ENCODE measurements at regions of chr12 and their contacts with region 1.

Region 1: GRCh38 chr12:32755654-32756475 is at the start of gene YARS2:
- DNase-seq: peak; percentile 97
- ATAC-seq: peak; percentile 95
- H3K4me3 ChIP-seq: peak within 1 kb of the TSS; percentile 98 to 99
- H3K27ac ChIP-seq: peak within 1 kb of the TSS; percentile 76
- H3K4me1 ChIP-seq: peaks cover 6 to 15% of the 10 kb centered on the region in 2 experiments; a peak in 2 of 4 replicates
- H3K27me3 ChIP-seq: no peaks in the 10 kb centered on the region
- CTCF ChIP-seq: peak; percentile 60 to 95 (median 87); a peak in 5 of 6 replicates
- POLR2A ChIP-seq: peak; percentile 94
- RAD21 ChIP-seq: peak; percentile 97
- total RNA-seq, gene YARS2: 26.7 TPM

Region 2: GRCh38 chr12:31650927-31651326 is 1104.9 kb before region 1 on chr12:
- CTCF ChIA-PET with region 1: interaction called, 40 read pairs
- POLR2A ChIA-PET with region 1: interaction called, 6 read pairs
- RAD21 ChIA-PET with region 1: interaction called in 1 of 2 experiments, 8 read pairs
- intact Hi-C with region 1: loop called (anchors 2 kb)
- DNase-seq: no peak
- ATAC-seq: no peak
- H3K4me3 ChIP-seq: no peak overlapping the region
- H3K27ac ChIP-seq: no peak overlapping the region
- H3K4me1 ChIP-seq: peaks cover 0 to 8% of the 10 kb centered on the region in 2 experiments; a peak in 2 of 4 replicates
- H3K27me3 ChIP-seq: no peaks in the 10 kb centered on the region
- CTCF ChIP-seq: no peak
- POLR2A ChIP-seq: no peak
- RAD21 ChIP-seq: no peak

Region 3: DNA sequence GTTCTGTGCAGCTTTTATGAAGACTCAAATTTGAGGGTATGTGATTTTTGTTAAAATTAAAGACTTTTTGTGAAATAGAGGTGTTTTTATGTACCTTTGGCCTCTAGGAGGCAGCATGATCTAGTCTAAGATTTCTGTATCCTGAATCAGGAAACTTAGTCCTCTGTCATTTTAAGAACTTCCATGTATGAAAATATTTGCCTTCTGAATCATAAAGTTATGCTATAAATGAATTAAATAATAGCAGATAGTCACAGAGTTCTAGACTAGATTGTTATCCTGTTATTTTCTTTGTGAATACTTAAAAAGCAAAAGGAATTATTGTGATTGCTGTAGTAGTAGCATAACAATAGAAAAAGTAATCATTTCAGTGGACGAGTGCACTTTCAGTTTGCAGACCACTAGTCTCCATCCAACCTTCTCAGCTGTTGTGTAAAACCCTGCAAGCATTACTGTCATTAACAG is 300.2 kb before region 1 on chr12:
- CTCF ChIA-PET with region 1: interaction called, 11 read pairs
- POLR2A ChIA-PET with region 1: no interaction called
- RAD21 ChIA-PET with region 1: no interaction called
- intact Hi-C with region 1: loop called (anchors 1 kb)
- DNase-seq: peak; percentile 45
- ATAC-seq: peak; percentile 55
- H3K4me3 ChIP-seq: peak overlapping the region in 1 of 2 experiments; percentile 19; a peak in 1 of 4 replicates
- H3K27ac ChIP-seq: no peak overlapping the region
- H3K4me1 ChIP-seq: peaks cover 13 to 32% of the 10 kb centered on the region in 2 experiments
- H3K27me3 ChIP-seq: no peaks in the 10 kb centered on the region
- CTCF ChIP-seq: peak; percentile 54 to 76 (median 62); a peak in 4 of 6 replicates
- POLR2A ChIP-seq: no peak
- RAD21 ChIP-seq: peak; percentile 77

Region 4: GRCh38 chr12:32896432-32897273 is 140.8 kb after region 1 on chr12 and contains the start of gene PKP2:
- CTCF ChIA-PET with region 1: interaction called, 10 read pairs
- POLR2A ChIA-PET with region 1: interaction called, 4 read pairs
- RAD21 ChIA-PET with region 1: interaction called in 1 of 2 experiments, 3 read pairs
- intact Hi-C with region 1: no loop called
- DNase-seq: peak; percentile 62
- ATAC-seq: peak; percentile 83
- H3K4me3 ChIP-seq: peak within 1 kb of the TSS; percentile 65 to 68
- H3K27ac ChIP-seq: peak within 1 kb of the TSS; percentile 57
- H3K4me1 ChIP-seq: peaks cover 39 to 55% of the 10 kb centered on the region in 2 experiments
- H3K27me3 ChIP-seq: no peaks in the 10 kb centered on the region
- CTCF ChIP-seq: no peak
- POLR2A ChIP-seq: no peak
- RAD21 ChIP-seq: no peak
- total RNA-seq, gene PKP2: 21.5 TPM

Region 5: GRCh38 chr12:32947206-32948067 is 191.6 kb after region 1 on chr12:
- CTCF ChIA-PET with region 1: interaction called, 11 read pairs
- POLR2A ChIA-PET with region 1: interaction called, 3 read pairs
- RAD21 ChIA-PET with region 1: interaction called in 1 of 2 experiments, 4 read pairs
- intact Hi-C with region 1: no loop called
- DNase-seq: peak; percentile 3
- ATAC-seq: no peak
- H3K4me3 ChIP-seq: no peak overlapping the region
- H3K27ac ChIP-seq: no peak overlapping the region
- H3K4me1 ChIP-seq: no peaks in the 10 kb centered on the region
- H3K27me3 ChIP-seq: 0 out of 2 replicates have a peak, but pooled peaks cover 8% of the 10 kb centered on the region
- CTCF ChIP-seq: peak in 2 of 3 experiments; percentile 15 to 41; a peak in 1 of 6 replicates
- POLR2A ChIP-seq: no peak
- RAD21 ChIP-seq: peak; percentile 51

Measured in HCT116 (cell line).